K562 (cell line): ENCODE measurements at regions of chr15 and their contacts with region 1.

Region 1: GRCh38 chr15:67833710-67834511 is 5.9 kb downstream of the RNU6-1 start:
- DNase-seq: peak; percentile 74 to 84 (median 76)
- ATAC-seq: peak; percentile 95
- H3K4me3 ChIP-seq: peak overlapping the region; percentile 36
- H3K27ac ChIP-seq: no peak overlapping the region
- H3K4me1 ChIP-seq: peaks cover 3 to 35% of the 10 kb centered on the region in 2 experiments
- H3K27me3 ChIP-seq: peaks cover 2 to 29% of the 10 kb centered on the region in 2 experiments; a peak in 4 of 5 replicates
- CTCF ChIP-seq: peak; percentile 76 to 87 (median 83)
- EP300 ChIP-seq: no peak
- POLR2A ChIP-seq: no peak
- RAD21 ChIP-seq: peak; percentile 90 to 91

Region 2: GRCh38 chr15:66946578-66947164 is 887.2 kb before region 1 on chr15:
- CTCF ChIA-PET with region 1: interaction called, 4 read pairs
- POLR2A ChIA-PET with region 1: no interaction called
- in situ Hi-C with region 1: no loop called
- intact Hi-C with region 1: loop called (anchors 5 kb)
- DNase-seq: peak; percentile 77 to 85 (median 81)
- ATAC-seq: peak; percentile 89
- H3K4me3 ChIP-seq: no peak overlapping the region
- H3K27ac ChIP-seq: no peak overlapping the region
- H3K4me1 ChIP-seq: peaks cover 0 to 9% of the 10 kb centered on the region in 2 experiments; a peak in 1 of 5 replicates
- H3K27me3 ChIP-seq: peaks cover 0 to 9% of the 10 kb centered on the region in 2 experiments; a peak in 1 of 5 replicates
- CTCF ChIP-seq: peak; percentile 89 to 95 (median 93)
- EP300 ChIP-seq: no peak
- POLR2A ChIP-seq: no peak
- RAD21 ChIP-seq: peak; percentile 94 to 98

Region 3: GRCh38 chr15:67383899-67384298 is 450.0 kb before region 1 on chr15:
- CTCF ChIA-PET with region 1: no interaction called
- POLR2A ChIA-PET with region 1: no interaction called
- in situ Hi-C with region 1: no loop called
- intact Hi-C with region 1: loop called (anchors 2 kb)
- DNase-seq: no peak
- ATAC-seq: no peak
- H3K4me3 ChIP-seq: no peak overlapping the region
- H3K27ac ChIP-seq: no peak overlapping the region
- H3K4me1 ChIP-seq: no peaks in the 10 kb centered on the region; a peak in 1 of 5 replicates
- H3K27me3 ChIP-seq: no peaks in the 10 kb centered on the region
- CTCF ChIP-seq: peak; percentile 35 to 68 (median 36); a peak in 3 of 6 replicates
- EP300 ChIP-seq: no peak
- POLR2A ChIP-seq: no peak
- RAD21 ChIP-seq: peak; percentile 37 to 71; a peak in 3 of 4 replicates

Region 4: GRCh38 chr15:67501177-67501835 is 332.6 kb before region 1 on chr15:
- CTCF ChIA-PET with region 1: interaction called, 20 read pairs
- POLR2A ChIA-PET with region 1: no interaction called
- in situ Hi-C with region 1: no loop called
- intact Hi-C with region 1: loop called (anchors 1 kb)
- DNase-seq: peak in 2 of 4 experiments; percentile 25 to 30
- ATAC-seq: peak; percentile 86
- H3K4me3 ChIP-seq: no peak overlapping the region
- H3K27ac ChIP-seq: no peak overlapping the region
- H3K4me1 ChIP-seq: no peaks in the 10 kb centered on the region
- H3K27me3 ChIP-seq: no peaks in the 10 kb centered on the region
- CTCF ChIP-seq: peak; percentile 27 to 66 (median 33); a peak in 3 of 6 replicates
- EP300 ChIP-seq: no peak
- POLR2A ChIP-seq: no peak
- RAD21 ChIP-seq: peak; percentile 62 to 88